OCI-LY7 (cell line): ENCODE measurements at regions of chr2 and their contacts with region 1.

Region 1: DNA sequence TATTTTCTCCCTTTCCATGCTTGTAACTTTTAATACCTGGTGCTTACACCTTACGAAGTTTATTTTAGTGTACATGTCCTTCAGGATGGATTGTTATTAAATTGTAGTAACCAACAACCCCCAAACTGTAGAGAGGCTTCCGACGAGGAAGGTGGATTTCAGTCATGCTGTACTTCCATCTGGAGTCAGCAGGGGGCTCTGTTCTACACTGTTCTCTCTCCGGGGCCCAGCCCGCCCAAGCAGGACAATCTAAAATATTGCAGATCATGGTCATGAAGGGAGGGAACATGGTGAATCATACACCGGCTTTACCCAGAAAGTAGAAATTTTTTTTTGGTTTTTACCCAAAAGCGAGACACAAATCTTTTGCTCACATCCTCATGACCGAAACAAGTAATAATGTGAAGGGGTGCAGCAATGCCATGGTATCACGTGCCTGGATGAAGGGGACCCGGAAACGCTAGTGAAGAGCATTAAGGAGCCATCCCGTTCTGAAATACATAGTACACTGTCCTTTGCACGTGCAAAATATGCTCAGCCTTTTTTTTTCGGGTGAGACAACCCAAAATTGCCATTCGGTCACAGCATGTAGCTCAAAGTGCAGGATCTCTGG is 884.8 kb downstream of the EPHA4 start:
- DNase-seq: peak; percentile 51
- H3K4me3 ChIP-seq: no peak overlapping the region
- H3K27ac ChIP-seq: no peak overlapping the region
- H3K4me1 ChIP-seq: no peaks in the 10 kb centered on the region
- CTCF ChIP-seq: peak; percentile 92

Region 2: DNA sequence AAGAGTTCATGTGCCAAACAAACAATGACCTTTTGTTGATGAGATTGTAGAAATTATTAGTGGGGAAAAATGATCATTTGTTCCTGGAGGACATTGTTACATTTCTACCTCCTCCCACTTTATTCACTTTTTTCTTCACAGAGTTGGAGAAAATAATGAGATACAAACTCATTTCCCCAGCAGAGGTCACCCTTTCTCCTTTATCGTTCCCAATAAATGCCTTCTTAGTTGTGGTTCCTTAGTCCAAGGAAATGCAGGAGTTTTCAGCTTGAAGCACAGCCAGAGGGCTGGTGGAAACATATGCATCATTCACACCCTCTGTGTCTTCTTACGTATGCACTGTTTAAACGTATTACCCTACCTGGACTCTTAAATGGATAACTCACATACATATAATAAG is 951.1 kb before region 1 on chr2:
- CTCF ChIA-PET with region 1: no interaction called
- POLR2A ChIA-PET with region 1: no interaction called
- intact Hi-C with region 1: loop called (anchors 10 kb)
- DNase-seq: peak; percentile 37
- H3K4me3 ChIP-seq: no peak overlapping the region
- H3K27ac ChIP-seq: no peak overlapping the region
- H3K4me1 ChIP-seq: no peaks in the 10 kb centered on the region
- CTCF ChIP-seq: peak; percentile 84

Region 3: DNA sequence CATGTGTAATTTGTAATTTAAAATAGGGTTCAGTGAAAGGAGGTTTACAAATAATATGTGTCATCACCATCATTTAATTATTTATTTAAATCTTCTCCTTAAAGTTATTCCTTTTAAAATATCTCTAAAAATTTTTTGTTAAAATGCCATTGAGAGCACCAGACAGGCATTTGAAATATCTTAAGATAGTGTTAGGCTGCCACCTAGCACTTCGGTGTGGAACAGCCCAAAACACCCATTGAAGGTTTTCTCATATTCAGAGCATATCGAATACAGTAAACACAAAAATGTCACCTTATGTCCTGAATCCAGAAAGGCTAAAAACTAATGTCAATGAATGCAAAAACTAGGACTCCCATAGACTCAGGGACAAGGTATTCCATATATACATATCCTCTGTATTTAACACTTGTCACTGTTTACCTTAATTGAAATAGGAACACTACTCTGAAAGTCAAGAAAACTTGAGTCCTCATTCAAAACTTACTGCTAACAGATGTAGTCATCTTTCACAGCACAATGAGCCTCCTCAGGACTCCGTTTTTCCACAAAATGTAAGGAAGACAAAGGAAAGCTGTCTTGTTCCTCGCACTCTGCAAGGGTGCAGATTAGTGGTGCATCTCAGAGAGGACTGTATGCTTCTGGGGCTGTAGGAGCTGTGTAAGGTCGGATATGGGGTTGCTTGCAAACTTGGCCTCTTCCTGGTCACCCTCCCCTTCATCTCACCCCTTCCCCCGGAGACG is 1281.9 kb after region 1 on chr2:
- CTCF ChIA-PET with region 1: no interaction called
- POLR2A ChIA-PET with region 1: no interaction called
- intact Hi-C with region 1: loop called (anchors 5 kb)
- DNase-seq: peak; percentile 33
- H3K4me3 ChIP-seq: no peak overlapping the region
- H3K27ac ChIP-seq: no peak overlapping the region
- H3K4me1 ChIP-seq: no peaks in the 10 kb centered on the region
- CTCF ChIP-seq: peak; percentile 83